ENCODE measurements at regions of chr6 and their contacts with region 1.

Region 1: GRCh38 chr6:75178757-75179156 is 27.1 kb downstream of the COL12A1 start:
- DNase-seq: no peak
- ATAC-seq: no peak
- H3K4me3 ChIP-seq: no peak overlapping the region
- H3K27ac ChIP-seq: no peak overlapping the region
- H3K4me1 ChIP-seq: peaks cover 6% of the 10 kb centered on the region
- H3K27me3 ChIP-seq: no peaks in the 10 kb centered on the region
- CTCF ChIP-seq: no peak
- POLR2A ChIP-seq: no peak
- RAD21 ChIP-seq: no peak

Region 2: GRCh38 chr6:75143191-75143590 is 35.6 kb before region 1 on chr6:
- CTCF ChIA-PET with region 1: no interaction called
- POLR2A ChIA-PET with region 1: no interaction called
- dilution Hi-C with region 1: no loop called
- in situ Hi-C with region 1: no loop called
- intact Hi-C with region 1: loop called (anchors 5 kb)
- DNase-seq: peak; percentile 90
- ATAC-seq: peak; percentile 65
- H3K4me3 ChIP-seq: no peak overlapping the region
- H3K27ac ChIP-seq: peak overlapping the region; percentile 40; the same call in 1 of the 2 replicates
- H3K4me1 ChIP-seq: peaks cover 12% of the 10 kb centered on the region; the same call in 1 of the 2 replicates
- H3K27me3 ChIP-seq: no peaks in the 10 kb centered on the region
- CTCF ChIP-seq: no peak
- POLR2A ChIP-seq: no peak
- RAD21 ChIP-seq: no peak

Measured in IMR-90 (cell line).